ENCODE measurements at regions of chr10 and their contacts with region 1.

Region 1: GRCh38 chr10:29452546-29452945 is 163.7 kb downstream of the LYZL1 start:
- DNase-seq: no peak
- H3K4me3 ChIP-seq: no peak overlapping the region
- H3K27ac ChIP-seq: no peak overlapping the region
- H3K4me1 ChIP-seq: no peaks in the 10 kb centered on the region
- H3K27me3 ChIP-seq: no peaks in the 10 kb centered on the region
- CTCF ChIP-seq: no peak
- POLR2A ChIP-seq: no peak

Region 2: DNA sequence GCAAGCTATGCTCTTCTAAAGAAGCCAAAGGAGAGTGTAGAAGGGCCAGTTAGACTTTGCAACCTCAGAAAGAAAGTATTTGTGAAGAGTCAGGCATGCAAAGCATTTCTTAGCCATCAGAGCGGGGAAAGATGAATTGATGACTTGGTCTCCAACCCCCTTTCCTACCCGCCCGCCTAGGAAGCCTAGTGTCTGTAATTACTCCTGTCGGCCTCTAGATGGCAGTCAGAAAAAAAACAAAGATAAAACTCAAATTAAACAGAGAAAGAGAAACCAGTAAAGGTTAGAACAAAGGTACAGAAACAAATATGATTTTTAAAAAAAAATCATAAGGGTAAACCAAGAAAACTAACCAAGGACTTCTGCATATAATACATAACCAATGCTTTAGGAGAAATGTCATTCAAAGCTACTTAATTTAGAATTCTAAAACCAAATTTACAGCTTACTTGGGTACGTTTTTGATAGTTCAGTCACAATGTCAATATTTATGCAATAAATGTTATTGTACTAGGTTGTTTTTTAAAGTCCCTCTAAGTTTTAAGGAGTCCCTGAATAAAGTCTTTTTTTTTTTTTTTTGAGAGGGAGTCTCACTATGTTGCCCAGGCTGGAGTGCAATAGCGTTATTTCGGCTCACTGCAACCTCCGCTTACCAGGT is 66.1 kb before region 1 on chr10:
- intact Hi-C with region 1: loop called (anchors 5 kb)
- DNase-seq: no peak
- H3K4me3 ChIP-seq: no peak overlapping the region
- H3K27ac ChIP-seq: no peak overlapping the region
- H3K4me1 ChIP-seq: peaks cover 0 to 7% of the 10 kb centered on the region in 2 donors
- H3K27me3 ChIP-seq: no peaks in the 10 kb centered on the region
- CTCF ChIP-seq: peak; percentile 47 to 84 (median 71)
- POLR2A ChIP-seq: no peak

Region 3: GRCh38 chr10:29409241-29410057 is 43.1 kb before region 1 on chr10:
- intact Hi-C with region 1: no loop called
- DNase-seq: peak; percentile 81 to 83
- H3K4me3 ChIP-seq: peak overlapping the region; percentile 52 to 77 (median 74)
- H3K27ac ChIP-seq: peak overlapping the region; percentile 63 to 92 (median 87)
- H3K4me1 ChIP-seq: peaks cover 19 to 31% of the 10 kb centered on the region in 2 donors
- H3K27me3 ChIP-seq: no peaks in the 10 kb centered on the region
- CTCF ChIP-seq: peak in 1 of 6 experiments; percentile 8
- POLR2A ChIP-seq: peak; percentile 58 to 84

Measured in thyroid gland (tissue), 4 donors.